WTC11 (cell line): ENCODE measurements at regions of chr20 and their contacts with region 1.

Region 1: DNA sequence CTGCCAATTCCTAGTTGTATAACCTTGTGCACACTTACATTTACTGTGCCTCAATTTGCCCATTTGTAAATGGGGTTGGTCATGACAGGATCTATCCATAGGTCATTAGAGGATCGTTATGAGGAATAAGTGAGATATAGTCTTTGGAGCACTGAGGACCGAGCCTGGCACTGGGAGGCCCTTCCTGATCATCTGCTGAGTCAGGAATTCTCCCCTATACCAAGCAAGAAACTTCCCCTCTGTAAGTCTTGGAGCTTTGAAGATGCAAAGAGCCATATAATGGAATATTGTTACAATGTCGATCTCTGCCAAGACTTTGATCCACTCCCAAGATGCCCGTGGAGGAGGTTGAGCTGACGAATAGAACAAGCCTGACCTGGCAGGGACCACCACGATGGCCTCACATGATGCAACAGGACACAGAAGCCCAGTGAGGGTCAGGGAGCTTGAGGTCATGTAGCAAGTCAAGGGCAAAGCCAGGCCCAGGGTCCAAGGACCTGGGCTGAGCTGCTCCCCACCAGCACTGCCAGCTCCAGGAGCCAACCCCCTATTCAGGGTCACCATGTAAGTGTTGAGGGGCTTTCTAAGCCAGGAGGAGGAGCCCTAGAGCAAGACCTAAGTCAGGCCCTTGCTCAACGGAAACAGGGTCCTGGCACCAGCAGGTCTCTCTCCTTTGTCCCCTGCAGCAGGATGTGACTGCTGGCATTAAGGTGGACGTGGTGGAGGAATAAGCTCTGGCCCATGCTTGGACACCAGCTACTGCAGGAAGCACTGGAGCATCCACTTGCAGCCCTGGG is 16.7 kb downstream of the PDRG1 start:
- DNase-seq: peak; percentile 49
- ATAC-seq: peak; percentile 97
- H3K4me3 Mint-ChIP-seq: no peak overlapping the region
- H3K27ac Mint-ChIP-seq: no peak overlapping the region
- H3K4me1 Mint-ChIP-seq: peaks cover 8% of the 10 kb centered on the region
- H3K27me3 Mint-ChIP-seq: peaks cover 4% of the 10 kb centered on the region; the same call in 1 of the 2 replicates
- CTCF ChIP-seq: no peak; the same call in 1 of the 2 replicates

Region 2: GRCh38 chr20:31822421-31823330 is 112.5 kb before region 1 on chr20:
- CTCF ChIA-PET with region 1: interaction called, 13 read pairs
- POLR2A ChIA-PET with region 1: no interaction called
- DNase-seq: peak; percentile 92
- ATAC-seq: peak; percentile 73
- H3K4me3 Mint-ChIP-seq: peak overlapping the region; percentile 49
- H3K27ac Mint-ChIP-seq: no peak overlapping the region
- H3K4me1 Mint-ChIP-seq: peaks cover 7% of the 10 kb centered on the region; the same call in 1 of the 2 replicates
- H3K27me3 Mint-ChIP-seq: no peaks in the 10 kb centered on the region
- CTCF ChIP-seq: peak; percentile 99

Region 3: GRCh38 chr20:31879143-31879987 is 55.8 kb before region 1 on chr20:
- CTCF ChIA-PET with region 1: interaction called, 10 read pairs
- POLR2A ChIA-PET with region 1: no interaction called
- DNase-seq: peak; percentile 96
- ATAC-seq: peak; percentile 99
- H3K4me3 Mint-ChIP-seq: peak overlapping the region; percentile 92
- H3K27ac Mint-ChIP-seq: peak overlapping the region; percentile 76; the same call in 1 of the 2 replicates
- H3K4me1 Mint-ChIP-seq: no peaks in the 10 kb centered on the region
- H3K27me3 Mint-ChIP-seq: peaks cover 25% of the 10 kb centered on the region
- CTCF ChIP-seq: no peak

Region 4: DNA sequence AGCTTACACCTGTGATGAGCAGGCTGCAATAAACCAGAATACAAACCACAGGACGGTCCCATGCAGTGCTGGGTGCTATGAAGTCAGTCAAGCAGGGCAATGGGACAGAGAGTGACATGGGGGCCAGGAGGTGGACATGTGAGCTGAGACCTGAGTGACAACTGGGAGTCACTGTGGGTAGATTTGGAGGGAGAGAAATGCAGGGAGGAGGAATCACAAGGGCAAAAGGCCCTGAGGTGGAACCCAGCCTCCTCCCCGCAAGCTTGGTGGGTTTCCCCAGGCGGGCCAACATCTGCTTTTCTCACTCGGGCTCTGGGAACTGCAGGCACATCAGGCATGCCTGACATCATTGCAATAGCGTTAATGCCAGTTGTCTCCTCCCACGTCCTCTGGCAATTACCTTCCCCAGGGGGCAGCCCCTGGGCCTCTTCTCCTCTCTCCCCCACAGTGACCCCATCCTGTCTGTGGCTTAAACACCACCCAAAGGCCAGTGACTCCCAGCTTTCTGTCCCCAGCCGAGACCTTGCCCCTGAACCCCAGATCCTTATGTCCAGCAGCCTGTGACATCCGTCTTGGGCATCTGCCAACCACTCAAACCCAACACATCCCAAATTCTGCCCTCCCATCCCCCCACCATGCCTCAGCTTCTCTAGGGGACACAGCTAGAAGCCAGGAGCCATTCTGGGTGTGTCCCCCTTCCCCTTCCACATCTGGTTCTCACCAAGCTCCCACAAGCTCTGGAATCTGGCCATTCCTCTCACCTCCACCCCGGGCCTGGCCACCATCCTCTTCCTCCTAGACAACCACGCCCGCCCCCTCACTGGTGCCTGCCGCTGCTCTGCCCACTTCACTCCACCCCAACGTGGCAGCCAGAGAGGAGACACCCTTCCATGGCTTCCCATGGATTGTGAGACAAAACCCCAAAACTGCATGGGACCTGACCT is 11.5 kb before region 1 on chr20:
- CTCF ChIA-PET with region 1: interaction called, 18 read pairs
- POLR2A ChIA-PET with region 1: interaction called, 3 read pairs
- DNase-seq: no peak
- ATAC-seq: no peak
- H3K4me3 Mint-ChIP-seq: no peak overlapping the region
- H3K27ac Mint-ChIP-seq: no peak overlapping the region
- H3K4me1 Mint-ChIP-seq: peaks cover 19% of the 10 kb centered on the region
- H3K27me3 Mint-ChIP-seq: peaks cover under 1% of the 10 kb centered on the region; the same call in 1 of the 2 replicates
- CTCF ChIP-seq: no peak

Region 5: GRCh38 chr20:31968291-31969126 is 33.3 kb after region 1 on chr20:
- CTCF ChIA-PET with region 1: interaction called, 10 read pairs
- POLR2A ChIA-PET with region 1: no interaction called
- DNase-seq: peak; percentile 95
- ATAC-seq: peak; percentile 85
- H3K4me3 Mint-ChIP-seq: peak overlapping the region; percentile 93
- H3K27ac Mint-ChIP-seq: peak overlapping the region; percentile 88; the same call in 1 of the 2 replicates
- H3K4me1 Mint-ChIP-seq: peaks cover 20% of the 10 kb centered on the region
- H3K27me3 Mint-ChIP-seq: peaks cover 47% of the 10 kb centered on the region
- CTCF ChIP-seq: no peak

Region 6: DNA sequence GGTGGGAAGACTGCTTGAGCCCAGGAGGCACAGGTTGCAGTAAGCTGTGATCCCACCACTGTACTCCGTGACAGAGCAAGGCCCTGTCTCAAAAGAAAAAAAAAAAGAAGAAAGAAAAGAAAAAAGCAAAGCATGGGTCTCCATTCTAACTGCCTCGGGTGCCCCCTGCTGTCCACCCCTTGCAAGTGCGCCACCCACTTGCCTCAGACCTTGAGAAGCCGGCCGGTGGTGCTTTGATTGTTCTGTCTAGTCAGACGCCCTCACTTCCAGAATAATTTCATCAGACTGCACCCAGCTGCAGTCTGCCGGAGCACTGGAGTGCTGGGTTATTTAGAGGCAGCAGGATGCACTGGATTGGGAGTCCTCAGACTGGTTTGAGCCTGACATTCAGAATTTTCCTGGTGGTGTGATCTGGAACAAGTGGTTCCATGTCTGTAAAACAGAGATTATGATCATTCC is 156.8 kb after region 1 on chr20:
- CTCF ChIA-PET with region 1: interaction called, 18 read pairs
- POLR2A ChIA-PET with region 1: interaction called, 3 read pairs
- DNase-seq: peak; percentile 91
- ATAC-seq: peak; percentile 62
- H3K4me3 Mint-ChIP-seq: no peak overlapping the region
- H3K27ac Mint-ChIP-seq: no peak overlapping the region
- H3K4me1 Mint-ChIP-seq: peaks cover 33% of the 10 kb centered on the region
- H3K27me3 Mint-ChIP-seq: peaks cover 6% of the 10 kb centered on the region; the same call in 1 of the 2 replicates
- CTCF ChIP-seq: peak; percentile 82